ENCODE measurements at regions of chrX and their contacts with region 1.

Region 1: DNA sequence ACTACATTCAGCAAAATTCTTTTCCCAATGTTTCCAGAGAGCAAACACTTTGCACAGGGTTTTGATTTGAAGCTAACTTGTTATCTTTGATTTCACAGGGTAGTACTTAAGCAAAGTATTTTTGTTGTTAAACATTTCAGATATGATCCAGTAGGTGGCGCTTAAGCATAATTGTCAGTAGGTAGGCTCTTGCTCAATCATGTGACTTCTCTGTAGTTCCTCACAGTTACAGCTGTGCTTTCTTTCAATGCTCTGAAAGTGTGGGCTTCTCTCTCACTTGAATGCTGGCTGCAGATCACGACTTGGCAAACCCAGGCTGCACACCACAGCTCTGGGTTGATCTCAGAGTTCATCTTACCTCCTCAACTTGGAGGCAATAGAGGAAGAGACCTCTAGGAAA is 1016.5 kb downstream of the SH3BGRL start:
- DNase-seq: peak; percentile 55
- ATAC-seq: peak; percentile 60
- H3K4me3 ChIP-seq: no peak overlapping the region
- H3K27ac ChIP-seq: no peak overlapping the region
- H3K4me1 ChIP-seq: no peaks in the 10 kb centered on the region
- H3K27me3 ChIP-seq: no peaks in the 10 kb centered on the region
- CTCF ChIP-seq: peak; percentile 67

Region 2: DNA sequence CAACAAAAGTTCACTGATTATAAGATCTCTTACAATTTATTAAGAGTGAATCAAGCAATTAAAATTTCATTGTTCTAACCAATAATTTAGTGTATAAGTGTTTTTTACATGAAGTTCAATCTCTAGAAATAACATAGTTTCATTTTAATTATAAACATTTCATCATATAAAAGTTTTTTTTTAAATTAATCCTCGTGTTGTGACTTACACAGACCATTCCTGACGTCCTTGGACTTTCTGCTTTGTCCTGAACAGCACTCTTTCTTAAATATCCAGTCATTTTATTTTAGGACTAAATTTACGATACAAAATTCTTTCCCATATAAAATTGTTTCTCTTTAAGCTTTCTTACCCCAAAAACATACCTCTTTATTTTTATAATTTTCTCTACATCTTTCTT is 448.0 kb after region 1 on chrX:
- CTCF ChIA-PET with region 1: no interaction called
- POLR2A ChIA-PET with region 1: no interaction called
- intact Hi-C with region 1: no loop called
- DNase-seq: no peak
- ATAC-seq: no peak
- H3K4me3 ChIP-seq: no peak overlapping the region
- H3K27ac ChIP-seq: no peak overlapping the region
- H3K4me1 ChIP-seq: no peaks in the 10 kb centered on the region
- H3K27me3 ChIP-seq: no peaks in the 10 kb centered on the region
- CTCF ChIP-seq: no peak

Region 3: DNA sequence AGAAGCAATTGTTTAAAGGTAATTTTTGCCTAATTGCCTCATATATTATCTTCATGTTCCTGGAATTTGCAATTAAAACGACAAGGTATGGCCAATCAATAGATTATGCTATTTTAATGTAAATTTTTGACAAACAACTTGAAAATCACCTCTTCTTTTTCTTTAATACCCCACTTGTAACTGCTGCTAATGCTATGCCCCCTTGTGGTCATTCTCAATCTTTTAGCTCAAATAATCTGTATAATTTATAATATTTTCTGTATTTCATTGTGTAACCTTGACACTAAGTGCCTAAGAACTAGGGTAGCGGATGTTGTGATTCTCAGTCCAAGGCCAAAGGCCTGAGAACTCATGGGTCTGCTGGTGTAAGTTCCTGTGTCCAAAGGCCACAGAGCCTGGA is 458.0 kb after region 1 on chrX:
- CTCF ChIA-PET with region 1: no interaction called
- POLR2A ChIA-PET with region 1: no interaction called
- intact Hi-C with region 1: loop called (anchors 1 kb)
- DNase-seq: peak; percentile 30
- ATAC-seq: no peak
- H3K4me3 ChIP-seq: no peak overlapping the region
- H3K27ac ChIP-seq: no peak overlapping the region
- H3K4me1 ChIP-seq: no peaks in the 10 kb centered on the region
- H3K27me3 ChIP-seq: no peaks in the 10 kb centered on the region
- CTCF ChIP-seq: peak; percentile 60